Endothelial cell of umbilical vein (primary cell): ENCODE measurements at regions of chr5 and their contacts with region 1.

Region 1: GRCh38 chr5:138223532-138223931 is 10.4 kb upstream of the CDC23 start:
- DNase-seq: no peak
- H3K4me3 ChIP-seq: no peak overlapping the region
- H3K27ac ChIP-seq: no peak overlapping the region
- H3K4me1 ChIP-seq: no peaks in the 10 kb centered on the region
- H3K27me3 ChIP-seq: no peaks in the 10 kb centered on the region
- CTCF ChIP-seq: no peak
- POLR2A ChIP-seq: no peak

Region 2: DNA sequence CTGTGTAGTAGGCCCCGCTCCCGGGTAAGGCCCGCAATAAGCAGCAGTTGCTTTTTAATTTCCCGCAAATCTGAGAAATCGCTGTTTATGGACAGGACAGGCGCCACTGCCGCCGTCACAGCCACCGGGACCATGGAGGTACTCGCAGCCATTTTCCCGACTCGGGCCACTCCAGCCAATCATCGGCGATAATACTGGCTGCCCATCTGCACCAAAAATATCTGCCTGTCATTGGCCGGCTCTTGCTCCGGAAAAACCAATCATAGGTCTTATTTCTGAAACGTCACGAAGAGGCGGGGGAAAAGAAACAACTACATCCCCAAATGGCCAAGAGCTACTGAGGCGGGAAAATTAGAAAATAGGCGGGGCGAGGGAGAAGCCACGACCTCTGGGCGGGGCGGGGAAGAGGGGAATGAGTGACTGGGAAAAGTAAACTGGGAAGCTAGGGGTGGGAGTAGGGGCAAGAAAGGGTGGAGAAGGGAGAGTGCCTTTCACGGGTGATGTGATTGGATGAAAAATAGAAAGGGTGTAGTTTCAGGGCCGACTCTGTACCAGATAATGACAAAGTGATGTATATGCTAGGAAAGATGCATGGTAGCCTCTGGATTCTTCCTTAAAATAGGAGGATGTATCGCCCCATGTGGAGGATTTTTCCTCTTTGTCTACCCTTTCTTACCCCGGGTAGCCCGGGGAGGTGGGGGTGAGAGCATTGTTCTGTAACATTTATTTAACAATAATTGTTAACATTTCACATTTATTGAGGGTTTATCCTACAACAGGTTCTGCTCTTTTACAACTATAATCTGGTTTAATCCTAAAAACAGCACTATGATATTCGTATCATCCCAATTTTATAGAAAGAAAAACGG is 10.1 kb before region 1 on chr5 and contains the start of gene CDC23:
- CTCF ChIA-PET with region 1: interaction called, 10 read pairs
- POLR2A ChIA-PET with region 1: no interaction called
- dilution Hi-C with region 1: no loop called
- intact Hi-C with region 1: no loop called
- DNase-seq: peak; percentile 99
- H3K4me3 ChIP-seq: peak within 1 kb of the TSS; percentile 46 to 71 (median 61)
- H3K27ac ChIP-seq: peak within 1 kb of the TSS; percentile 77
- H3K4me1 ChIP-seq: peaks cover 11% of the 10 kb centered on the region
- H3K27me3 ChIP-seq: no peaks in the 10 kb centered on the region
- CTCF ChIP-seq: no peak
- POLR2A ChIP-seq: peak; percentile 27
- total RNA-seq, gene CDC23: 39.4 and 41.2 TPM in 2 replicates

Region 3: GRCh38 chr5:138238034-138238433 is 14.5 kb after region 1 on chr5:
- CTCF ChIA-PET with region 1: interaction called, 14 read pairs
- POLR2A ChIA-PET with region 1: no interaction called
- dilution Hi-C with region 1: no loop called
- intact Hi-C with region 1: no loop called
- DNase-seq: no peak
- H3K4me3 ChIP-seq: no peak overlapping the region
- H3K27ac ChIP-seq: no peak overlapping the region
- H3K4me1 ChIP-seq: peaks cover 2% of the 10 kb centered on the region
- H3K27me3 ChIP-seq: peaks cover 5 to 10% of the 10 kb centered on the region in 2 experiments
- CTCF ChIP-seq: no peak
- POLR2A ChIP-seq: no peak

Region 4: DNA sequence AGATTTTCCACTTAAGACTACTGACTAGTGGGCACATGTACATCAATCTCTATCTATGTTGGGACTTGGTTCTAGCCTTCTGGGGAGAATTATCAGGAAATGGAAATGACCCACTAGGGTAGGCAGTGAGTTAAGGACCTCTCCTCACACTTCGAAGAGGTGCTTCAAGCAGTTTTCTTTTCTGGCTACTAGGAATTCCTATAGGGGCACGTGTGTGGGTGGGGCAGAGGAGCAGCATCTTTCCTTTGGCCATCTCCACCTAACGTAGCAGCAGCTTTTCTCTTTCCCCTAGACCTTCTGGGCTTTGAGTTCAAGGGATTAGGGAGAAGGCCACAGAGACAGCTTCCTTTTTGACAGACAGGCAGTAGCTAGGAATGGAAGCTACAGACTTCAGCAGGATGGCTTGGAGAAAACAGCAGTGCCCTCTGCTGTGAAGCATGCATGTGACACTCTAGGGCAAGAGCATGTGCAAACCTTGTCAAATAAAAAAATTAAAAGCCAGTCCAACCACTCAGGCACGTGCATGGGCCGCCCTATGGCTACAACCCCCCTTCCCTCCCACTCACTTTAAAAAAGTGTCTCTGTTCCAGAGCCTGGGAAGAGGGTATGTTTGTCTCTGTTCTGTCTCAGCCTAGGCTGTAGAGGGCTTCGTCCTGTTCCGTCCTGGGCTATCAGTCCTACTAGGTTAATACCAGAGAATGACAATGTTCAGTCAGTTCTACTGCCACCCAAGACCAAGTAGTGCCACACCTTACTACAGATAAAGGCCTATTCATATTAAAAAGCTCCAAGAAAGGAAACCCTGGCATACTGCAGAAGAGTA is 59.6 kb after region 1 on chr5:
- CTCF ChIA-PET with region 1: interaction called, 105 read pairs
- POLR2A ChIA-PET with region 1: no interaction called
- dilution Hi-C with region 1: no loop called
- intact Hi-C with region 1: loop called (anchors 1 kb)
- DNase-seq: peak; percentile 63
- H3K4me3 ChIP-seq: no peak overlapping the region
- H3K27ac ChIP-seq: no peak overlapping the region
- H3K4me1 ChIP-seq: no peaks in the 10 kb centered on the region
- H3K27me3 ChIP-seq: no peaks in the 10 kb centered on the region
- CTCF ChIP-seq: peak; percentile 18 to 70
- POLR2A ChIP-seq: no peak

Region 5: GRCh38 chr5:138305797-138306196 is 82.3 kb after region 1 on chr5:
- CTCF ChIA-PET with region 1: no interaction called
- POLR2A ChIA-PET with region 1: no interaction called
- dilution Hi-C with region 1: no loop called
- intact Hi-C with region 1: no loop called
- DNase-seq: no peak
- H3K4me3 ChIP-seq: no peak overlapping the region
- H3K27ac ChIP-seq: no peak overlapping the region
- H3K4me1 ChIP-seq: no peaks in the 10 kb centered on the region
- H3K27me3 ChIP-seq: no peaks in the 10 kb centered on the region
- CTCF ChIP-seq: no peak
- POLR2A ChIP-seq: no peak

Region 6: GRCh38 chr5:138337685-138338410 is 114.3 kb after region 1 on chr5 and contains the start of gene FAM53C:
- CTCF ChIA-PET with region 1: interaction called, 6 read pairs
- POLR2A ChIA-PET with region 1: no interaction called
- dilution Hi-C with region 1: no loop called
- intact Hi-C with region 1: loop called (anchors 5 kb)
- DNase-seq: peak; percentile 95
- H3K4me3 ChIP-seq: peak within 1 kb of the TSS; percentile 26 to 84 (median 62)
- H3K27ac ChIP-seq: peak within 1 kb of the TSS; percentile 81
- H3K4me1 ChIP-seq: peaks cover 13% of the 10 kb centered on the region
- H3K27me3 ChIP-seq: no peaks in the 10 kb centered on the region
- CTCF ChIP-seq: no peak
- POLR2A ChIP-seq: peak; percentile 100
- total RNA-seq, gene FAM53C: 34.2 and 37.4 TPM in 2 replicates

Region 7: GRCh38 chr5:138352071-138352721 is 128.7 kb after region 1 on chr5 and contains the start of gene KDM3B:
- CTCF ChIA-PET with region 1: interaction called, 25 read pairs
- POLR2A ChIA-PET with region 1: no interaction called
- dilution Hi-C with region 1: no loop called
- intact Hi-C with region 1: loop called (anchors 5 kb)
- DNase-seq: peak; percentile 79
- H3K4me3 ChIP-seq: peak within 1 kb of the TSS; percentile 58 to 95 (median 78)
- H3K27ac ChIP-seq: peak within 1 kb of the TSS; percentile 65
- H3K4me1 ChIP-seq: peaks cover 14% of the 10 kb centered on the region
- H3K27me3 ChIP-seq: no peaks in the 10 kb centered on the region
- CTCF ChIP-seq: peak; percentile 99 to 100
- POLR2A ChIP-seq: peak; percentile 41
- total RNA-seq, gene KDM3B: 52.6 and 55.7 TPM in 2 replicates

Region 8: DNA sequence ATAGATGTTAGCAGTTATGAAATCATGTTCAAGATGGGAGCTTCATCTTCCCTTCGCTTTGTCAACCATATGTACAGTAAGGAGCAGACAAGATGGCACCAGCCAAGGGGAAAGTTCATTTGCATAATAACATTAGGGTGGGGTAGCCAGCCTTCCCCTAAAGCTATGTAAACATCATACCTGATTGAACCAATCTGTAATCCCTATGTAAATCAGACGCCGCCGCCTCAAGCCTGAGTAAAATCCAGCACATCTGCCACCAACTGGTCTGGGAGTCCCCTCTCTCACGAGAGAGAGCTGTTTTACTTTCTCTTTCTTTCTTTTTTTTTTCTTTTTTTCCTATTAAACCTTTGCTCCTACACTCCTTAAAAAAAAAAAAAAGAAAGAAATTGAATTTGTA is 184.5 kb after region 1 on chr5:
- CTCF ChIA-PET with region 1: interaction called, 8 read pairs
- POLR2A ChIA-PET with region 1: no interaction called
- dilution Hi-C with region 1: no loop called
- intact Hi-C with region 1: loop called (anchors 1 kb)
- DNase-seq: no peak
- H3K4me3 ChIP-seq: no peak overlapping the region
- H3K27ac ChIP-seq: no peak overlapping the region
- H3K4me1 ChIP-seq: no peaks in the 10 kb centered on the region
- H3K27me3 ChIP-seq: no peaks in the 10 kb centered on the region
- CTCF ChIP-seq: no peak
- POLR2A ChIP-seq: no peak

Region 9: GRCh38 chr5:138459311-138459933 is 235.9 kb after region 1 on chr5:
- CTCF ChIA-PET with region 1: no interaction called
- POLR2A ChIA-PET with region 1: no interaction called
- dilution Hi-C with region 1: no loop called
- intact Hi-C with region 1: no loop called
- DNase-seq: peak; percentile 34
- H3K4me3 ChIP-seq: no peak overlapping the region
- H3K27ac ChIP-seq: no peak overlapping the region
- H3K4me1 ChIP-seq: peaks cover 15% of the 10 kb centered on the region
- H3K27me3 ChIP-seq: no peaks in the 10 kb centered on the region
- CTCF ChIP-seq: no peak
- POLR2A ChIP-seq: no peak